Common myeloid progenitor, CD34-positive (primary cell): ENCODE measurements at regions of chr14 and their contacts with region 1.

Region 1: DNA sequence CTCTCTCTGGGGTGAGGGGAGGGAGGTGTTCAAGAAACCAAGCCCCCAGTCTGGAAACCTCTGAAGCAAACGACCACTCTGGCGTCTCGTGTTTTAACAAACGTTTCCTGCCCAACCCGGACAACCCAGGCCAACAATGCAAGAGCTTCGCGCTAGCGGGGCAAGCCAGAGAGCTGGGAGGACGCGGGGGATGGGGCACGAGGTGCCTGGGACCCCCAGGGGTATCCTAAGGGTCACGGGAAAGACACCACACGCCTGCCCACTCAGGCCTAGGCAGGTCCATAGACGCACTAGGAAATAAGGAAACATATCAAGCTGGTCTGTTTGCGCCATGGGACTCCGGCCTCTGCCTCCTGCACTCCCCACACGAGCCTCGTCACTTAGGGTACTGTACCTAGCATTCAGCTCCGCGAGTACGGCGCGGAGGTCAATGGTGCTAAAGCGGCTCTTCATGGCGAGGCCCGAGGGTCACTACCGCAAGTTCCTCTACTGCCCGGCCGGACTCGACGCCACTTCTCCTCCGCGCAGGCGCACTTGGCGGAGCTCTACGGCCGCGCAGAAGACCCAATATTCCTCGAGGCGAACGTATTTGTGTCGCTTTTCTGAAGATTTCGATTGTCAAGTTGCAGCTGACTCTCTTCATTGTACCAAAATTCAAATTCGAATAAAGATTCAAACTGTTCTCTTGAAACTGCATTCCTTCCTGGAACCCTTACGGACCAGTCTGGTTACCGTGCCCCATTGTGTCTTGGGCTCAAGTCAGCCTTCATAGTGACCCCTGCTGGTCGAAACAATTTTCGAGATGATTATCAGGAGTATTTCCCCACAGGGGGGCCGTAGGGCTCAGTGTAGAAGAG is at the start of gene NEMF:
- DNase-seq: peak; percentile 94 to 96 (median 95)
- H3K4me3 ChIP-seq: peak within 1 kb of the TSS; percentile 85 to 100 (median 98)
- H3K27ac ChIP-seq: peak within 1 kb of the TSS; percentile 91 to 97
- H3K4me1 ChIP-seq: peaks cover 9 to 19% (median 10%) of the 10 kb centered on the region in 4 experiments
- H3K27me3 ChIP-seq: no peaks in the 10 kb centered on the region

Region 2: GRCh38 chr14:49732896-49733295 is 119.6 kb before region 1 on chr14:
- CTCF ChIA-PET with region 1: no interaction called
- POLR2A ChIA-PET with region 1: no interaction called
- DNase-seq: no peak
- H3K4me3 ChIP-seq: no peak overlapping the region
- H3K27ac ChIP-seq: no peak overlapping the region
- H3K4me1 ChIP-seq: peaks cover 0 to 7% (median 4%) of the 10 kb centered on the region in 4 experiments
- H3K27me3 ChIP-seq: no peaks in the 10 kb centered on the region

Region 3: GRCh38 chr14:49828640-49829039 is 23.9 kb before region 1 on chr14:
- CTCF ChIA-PET with region 1: interaction called, 17 read pairs
- POLR2A ChIA-PET with region 1: no interaction called
- DNase-seq: no peak
- H3K4me3 ChIP-seq: no peak overlapping the region
- H3K27ac ChIP-seq: no peak overlapping the region
- H3K4me1 ChIP-seq: no peaks in the 10 kb centered on the region
- H3K27me3 ChIP-seq: no peaks in the 10 kb centered on the region

Region 4: GRCh38 chr14:50109342-50109741 is 256.8 kb after region 1 on chr14:
- CTCF ChIA-PET with region 1: interaction called, 17 read pairs
- POLR2A ChIA-PET with region 1: interaction called, 3 read pairs
- DNase-seq: peak; percentile 17 to 43 (median 39)
- H3K4me3 ChIP-seq: no peak overlapping the region
- H3K27ac ChIP-seq: no peak overlapping the region
- H3K4me1 ChIP-seq: peaks cover 0 to 3% (median 1%) of the 10 kb centered on the region in 4 experiments
- H3K27me3 ChIP-seq: no peaks in the 10 kb centered on the region

Region 5: GRCh38 chr14:50116181-50116956 is 263.8 kb after region 1 on chr14 and contains the start of gene VCPKMT:
- CTCF ChIA-PET with region 1: interaction called, 14 read pairs
- POLR2A ChIA-PET with region 1: interaction called, 3 read pairs
- DNase-seq: peak; percentile 91 to 95 (median 95)
- H3K4me3 ChIP-seq: peak within 1 kb of the TSS; percentile 80 to 97 (median 95)
- H3K27ac ChIP-seq: peak within 1 kb of the TSS; percentile 75 to 91
- H3K4me1 ChIP-seq: peaks cover 5 to 15% (median 11%) of the 10 kb centered on the region in 4 experiments
- H3K27me3 ChIP-seq: no peaks in the 10 kb centered on the region